CD14-positive monocyte (primary cell): ENCODE measurements at regions of chr14 and their contacts with region 1.

Region 1: GRCh38 chr14:92417759-92418158 is 94.8 kb downstream of the SLC24A4 start:
- DNase-seq: peak; percentile 84 to 97 (median 94)
- H3K4me3 ChIP-seq: no peak overlapping the region
- H3K4me3 Mint-ChIP-seq: no peak overlapping the region
- H3K27ac ChIP-seq: peak overlapping the region; percentile 80 to 88
- H3K27ac Mint-ChIP-seq: peak overlapping the region; percentile 89 to 98 (median 94)
- H3K4me1 ChIP-seq: peaks cover 64 to 66% of the 10 kb centered on the region in 2 donors
- H3K4me1 Mint-ChIP-seq: peaks cover 51% of the 10 kb centered on the region
- H3K27me3 ChIP-seq: no peaks in the 10 kb centered on the region
- H3K27me3 Mint-ChIP-seq: peaks cover 0 to 4% (median 0%) of the 10 kb centered on the region in 3 donors
- CTCF ChIP-seq: no peak

Region 2: DNA sequence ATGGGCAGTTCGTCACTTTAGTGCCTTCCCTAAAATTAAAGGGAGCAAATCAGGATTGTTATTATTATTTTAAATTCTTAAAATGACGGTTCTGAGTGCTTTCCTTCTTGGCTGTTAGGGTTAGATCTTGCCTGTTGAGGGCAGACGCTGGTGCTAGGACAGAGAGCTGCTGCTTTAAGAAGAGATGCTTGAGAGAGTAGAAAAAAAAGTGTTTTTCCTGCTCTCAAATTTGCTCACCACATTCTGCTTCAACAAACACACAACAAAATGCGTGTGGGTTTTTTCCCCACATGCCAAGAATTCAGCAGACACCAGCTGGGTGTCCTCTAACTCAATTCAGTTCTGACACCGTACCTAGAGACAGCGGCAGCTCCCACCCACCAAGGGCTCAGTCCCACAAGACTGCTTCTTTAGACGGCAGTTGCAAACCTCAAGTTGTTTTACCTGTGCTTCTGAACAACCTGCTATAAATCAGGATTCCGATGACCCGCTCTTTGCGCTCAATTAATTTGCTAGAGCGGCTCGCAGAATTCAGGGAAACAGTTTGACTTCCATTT is 20.0 kb after region 1 on chr14:
- intact Hi-C with region 1: no loop called
- DNase-seq: no peak
- H3K4me3 ChIP-seq: no peak overlapping the region
- H3K4me3 Mint-ChIP-seq: no peak overlapping the region
- H3K27ac ChIP-seq: no peak overlapping the region
- H3K27ac Mint-ChIP-seq: peak overlapping the region in 1 of 7 donors; percentile 8
- H3K4me1 ChIP-seq: peaks cover 22 to 28% of the 10 kb centered on the region in 2 donors
- H3K4me1 Mint-ChIP-seq: peaks cover 33% of the 10 kb centered on the region
- H3K27me3 ChIP-seq: no peaks in the 10 kb centered on the region
- H3K27me3 Mint-ChIP-seq: peaks cover 2 to 10% (median 4%) of the 10 kb centered on the region in 3 donors
- CTCF ChIP-seq: no peak

Region 3: GRCh38 chr14:92450351-92451070 is 32.8 kb after region 1 on chr14:
- intact Hi-C with region 1: loop called in 1 of 2 experiments (anchors 5 kb)
- DNase-seq: peak in 1 of 3 donors; percentile 35
- H3K4me3 ChIP-seq: no peak overlapping the region
- H3K4me3 Mint-ChIP-seq: peak overlapping the region in 1 of 2 donors; percentile 36
- H3K27ac ChIP-seq: peak overlapping the region; percentile 30 to 53
- H3K27ac Mint-ChIP-seq: peak overlapping the region in 6 of 7 donors; percentile 10 to 81 (median 67)
- H3K4me1 ChIP-seq: peaks cover 22% of the 10 kb centered on the region in 2 donors
- H3K4me1 Mint-ChIP-seq: peaks cover 42% of the 10 kb centered on the region
- H3K27me3 ChIP-seq: no peaks in the 10 kb centered on the region
- H3K27me3 Mint-ChIP-seq: peaks cover 0 to 8% (median 0%) of the 10 kb centered on the region in 3 donors
- CTCF ChIP-seq: no peak